ENCODE measurements at regions of chr14 and their contacts with region 1.

Region 1: GRCh38 chr14:102516531-102517415 is 7.2 kb upstream of the ANKRD9 start:
- DNase-seq: no peak
- ATAC-seq: peak; percentile 88
- H3K4me3 ChIP-seq: peak overlapping the region; percentile 48 to 52
- H3K27ac ChIP-seq: no peak overlapping the region
- H3K4me1 ChIP-seq: no peaks in the 10 kb centered on the region
- H3K27me3 ChIP-seq: no peaks in the 10 kb centered on the region
- CTCF ChIP-seq: peak; percentile 95

Region 2: GRCh38 chr14:101506926-101507835 is 1009.6 kb before region 1 on chr14:
- CTCF ChIA-PET with region 1: no interaction called
- POLR2A ChIA-PET with region 1: no interaction called
- in situ Hi-C with region 1: no loop called
- intact Hi-C with region 1: no loop called
- DNase-seq: no peak
- ATAC-seq: no peak
- H3K4me3 ChIP-seq: no peak overlapping the region
- H3K27ac ChIP-seq: no peak overlapping the region
- H3K4me1 ChIP-seq: no peaks in the 10 kb centered on the region
- H3K27me3 ChIP-seq: no peaks in the 10 kb centered on the region
- CTCF ChIP-seq: no peak

Region 3: GRCh38 chr14:102255401-102256190 is 261.2 kb before region 1 on chr14:
- CTCF ChIA-PET with region 1: no interaction called
- POLR2A ChIA-PET with region 1: no interaction called
- in situ Hi-C with region 1: no loop called
- intact Hi-C with region 1: no loop called
- DNase-seq: no peak
- ATAC-seq: no peak
- H3K4me3 ChIP-seq: no peak overlapping the region
- H3K27ac ChIP-seq: peak overlapping the region; percentile 23; the same call in 1 of the 2 replicates
- H3K4me1 ChIP-seq: no peaks in the 10 kb centered on the region
- H3K27me3 ChIP-seq: no peaks in the 10 kb centered on the region
- CTCF ChIP-seq: no peak

Region 4: GRCh38 chr14:102437997-102438915 is 78.5 kb before region 1 on chr14:
- CTCF ChIA-PET with region 1: interaction called, 4 read pairs
- POLR2A ChIA-PET with region 1: interaction called, 5 read pairs
- in situ Hi-C with region 1: no loop called
- intact Hi-C with region 1: loop called (anchors 5 kb)
- DNase-seq: peak; percentile 20
- ATAC-seq: peak; percentile 98
- H3K4me3 ChIP-seq: 0 out of 4 replicates have a peak overlapping the region, but pooled peaks of 1 of the 2 experiments have one; percentile 26
- H3K27ac ChIP-seq: no peak overlapping the region
- H3K4me1 ChIP-seq: no peaks in the 10 kb centered on the region
- H3K27me3 ChIP-seq: no peaks in the 10 kb centered on the region
- CTCF ChIP-seq: peak; percentile 83

Region 5: GRCh38 chr14:102491366-102491765 is 25.4 kb before region 1 on chr14:
- CTCF ChIA-PET with region 1: interaction called, 12 read pairs
- POLR2A ChIA-PET with region 1: no interaction called
- in situ Hi-C with region 1: no loop called
- intact Hi-C with region 1: no loop called
- DNase-seq: no peak
- ATAC-seq: no peak
- H3K4me3 ChIP-seq: no peak overlapping the region
- H3K27ac ChIP-seq: no peak overlapping the region
- H3K4me1 ChIP-seq: no peaks in the 10 kb centered on the region
- H3K27me3 ChIP-seq: no peaks in the 10 kb centered on the region
- CTCF ChIP-seq: no peak

Measured in Panc1 (cell line).